PC-9 (cell line): ENCODE measurements at regions of chr2 and their contacts with region 1.

Region 1: DNA sequence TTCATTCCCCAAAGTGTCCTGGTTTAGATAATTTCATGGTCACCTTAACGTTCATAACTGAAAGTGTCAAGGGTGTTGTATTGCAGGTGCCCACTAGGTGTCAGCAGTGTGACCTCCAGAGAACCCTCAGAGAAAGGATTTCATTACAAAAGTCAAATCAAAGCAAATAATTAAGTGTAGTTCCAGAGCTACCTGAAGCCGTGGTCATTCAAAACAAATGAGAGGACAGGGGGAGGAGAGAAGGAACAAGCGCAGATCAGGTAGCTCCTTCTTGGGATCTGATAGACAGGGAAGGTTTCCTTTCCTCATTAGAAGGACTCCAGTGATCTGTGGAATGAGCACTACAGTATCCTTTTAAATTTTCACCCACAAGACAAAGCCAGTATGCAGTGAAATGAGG is at the start of gene SLC9A4:
- DNase-seq: peak; percentile 61 to 69
- H3K4me3 ChIP-seq: no peak within 1 kb of the TSS
- H3K27ac ChIP-seq: no peak within 1 kb of the TSS
- H3K4me1 ChIP-seq: peaks cover 9% of the 10 kb centered on the region; the same call in 1 of the 2 replicates
- H3K27me3 ChIP-seq: no peaks in the 10 kb centered on the region
- CTCF ChIP-seq: peak; percentile 97
- total RNA-seq, gene SLC9A4: 0.85 and 1.1 TPM in 2 replicates

Region 2: GRCh38 chr2:102514061-102514785 is 41.2 kb after region 1 on chr2:
- CTCF ChIA-PET with region 1: interaction called, 7 read pairs
- POLR2A ChIA-PET with region 1: no interaction called
- intact Hi-C with region 1: loop called (anchors 1 kb)
- DNase-seq: peak; percentile 63 to 93
- H3K4me3 ChIP-seq: 0 out of 2 replicates have a peak overlapping the region, but pooled peaks have one; percentile 30
- H3K27ac ChIP-seq: peak overlapping the region; percentile 76
- H3K4me1 ChIP-seq: peaks cover 33% of the 10 kb centered on the region
- H3K27me3 ChIP-seq: no peaks in the 10 kb centered on the region
- CTCF ChIP-seq: no peak

Region 3: GRCh38 chr2:102540641-102541281 is 67.7 kb after region 1 on chr2:
- CTCF ChIA-PET with region 1: interaction called, 6 read pairs
- POLR2A ChIA-PET with region 1: no interaction called
- intact Hi-C with region 1: loop called (anchors 1 kb)
- DNase-seq: peak; percentile 74 to 77
- H3K4me3 ChIP-seq: no peak overlapping the region
- H3K27ac ChIP-seq: peak overlapping the region; percentile 71
- H3K4me1 ChIP-seq: peaks cover 16% of the 10 kb centered on the region
- H3K27me3 ChIP-seq: no peaks in the 10 kb centered on the region
- CTCF ChIP-seq: no peak

Region 4: DNA sequence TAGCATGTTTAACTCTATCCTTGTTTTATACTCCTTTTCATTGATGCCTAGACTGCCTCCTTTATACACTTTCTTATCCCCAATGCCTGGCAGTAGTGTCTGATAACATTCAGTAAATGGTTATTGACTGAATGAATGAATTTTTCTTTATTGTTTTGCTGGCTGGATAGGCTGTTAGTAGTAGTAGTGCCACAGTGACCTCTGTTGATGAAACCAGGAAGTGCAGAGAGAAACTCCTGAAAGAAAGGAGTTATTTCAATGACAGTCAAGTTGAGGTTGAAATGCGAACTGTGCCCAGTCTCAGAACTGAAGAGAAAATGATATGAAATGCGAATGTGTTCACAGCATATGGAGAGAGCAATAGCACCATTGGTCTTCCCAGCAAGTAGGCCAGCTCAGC is 119.6 kb after region 1 on chr2:
- CTCF ChIA-PET with region 1: interaction called, 4 read pairs
- POLR2A ChIA-PET with region 1: no interaction called
- intact Hi-C with region 1: loop called (anchors 1 kb)
- DNase-seq: peak in 1 of 2 experiments; percentile 21
- H3K4me3 ChIP-seq: no peak overlapping the region
- H3K27ac ChIP-seq: no peak overlapping the region
- H3K4me1 ChIP-seq: peaks cover 32% of the 10 kb centered on the region
- H3K27me3 ChIP-seq: no peaks in the 10 kb centered on the region
- CTCF ChIP-seq: peak; percentile 71

Region 5: DNA sequence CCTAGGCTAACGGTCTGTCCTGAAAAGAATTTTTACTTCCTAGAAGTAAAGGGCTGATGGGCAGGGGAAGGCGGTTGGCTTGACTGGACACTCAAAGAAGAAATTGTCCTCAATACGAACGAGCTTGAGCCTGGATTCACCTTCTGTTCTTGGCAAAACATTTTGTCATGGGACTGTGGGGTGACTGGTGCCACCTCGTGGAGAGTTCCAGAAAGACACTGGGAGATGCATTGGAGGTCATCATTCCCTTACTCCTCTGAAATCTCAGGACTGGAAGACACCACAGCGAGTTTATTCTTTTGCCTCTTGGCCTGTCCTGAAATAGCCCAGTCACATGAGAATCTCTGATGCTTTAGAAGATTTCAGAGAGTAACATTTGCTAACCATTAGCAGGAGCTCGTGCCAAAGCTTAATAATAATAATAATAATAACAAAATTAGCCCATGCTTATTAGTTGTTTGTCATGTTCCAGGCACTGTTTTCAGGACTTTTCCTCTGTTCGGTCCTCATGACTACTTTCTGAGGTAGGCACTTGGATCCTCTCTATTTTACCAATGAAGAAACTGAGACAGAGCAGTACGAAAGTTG is 333.3 kb after region 1 on chr2:
- CTCF ChIA-PET with region 1: no interaction called
- POLR2A ChIA-PET with region 1: no interaction called
- intact Hi-C with region 1: loop called (anchors 5 kb)
- DNase-seq: peak in 1 of 2 experiments; percentile 67
- H3K4me3 ChIP-seq: no peak overlapping the region
- H3K27ac ChIP-seq: no peak overlapping the region
- H3K4me1 ChIP-seq: no peaks in the 10 kb centered on the region
- H3K27me3 ChIP-seq: no peaks in the 10 kb centered on the region
- CTCF ChIP-seq: peak; percentile 77